Caco-2 (cell line): ENCODE measurements at regions of chr6 and their contacts with region 1.

Region 1: DNA sequence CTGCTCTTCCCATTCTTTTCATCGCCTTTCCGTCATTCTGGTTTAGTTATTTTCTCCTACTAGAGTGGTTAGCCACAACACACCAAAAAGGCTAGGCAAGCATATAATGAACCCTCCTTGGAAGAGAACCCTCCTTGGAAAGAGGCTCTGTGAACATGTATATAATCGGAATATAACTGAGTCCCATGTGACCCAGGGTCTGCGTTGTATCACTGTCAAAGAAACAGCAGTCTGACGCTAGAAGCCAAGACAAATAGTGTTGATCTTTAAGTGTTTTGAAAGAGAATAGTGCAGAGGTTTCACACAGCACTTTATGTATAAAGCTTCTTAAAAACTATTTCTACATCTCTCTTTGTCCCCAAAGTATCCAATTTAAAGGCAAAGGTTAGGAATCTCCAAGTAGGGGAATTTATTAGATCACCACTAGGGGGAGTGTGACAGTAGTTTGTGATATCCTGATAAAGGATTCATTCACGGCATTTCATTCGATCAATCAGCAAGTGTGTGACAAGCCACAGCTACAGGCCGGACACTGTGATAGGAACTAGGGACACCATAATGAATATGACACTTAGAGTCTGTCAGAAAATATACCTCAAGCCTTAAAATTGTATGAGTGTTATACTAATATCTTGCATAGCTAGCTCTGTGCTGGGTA is 395.3 kb downstream of the CD109 start:
- DNase-seq: peak in 1 of 2 experiments; percentile 41
- H3K4me3 ChIP-seq: no peak overlapping the region
- H3K4me3 Mint-ChIP-seq: no peak overlapping the region
- H3K27ac Mint-ChIP-seq: no peak overlapping the region
- H3K4me1 ChIP-seq: peaks cover 5% of the 10 kb centered on the region; the same call in 1 of the 2 replicates
- H3K4me1 Mint-ChIP-seq: no peaks in the 10 kb centered on the region
- H3K27me3 ChIP-seq: no peaks in the 10 kb centered on the region
- H3K27me3 Mint-ChIP-seq: peaks cover 2% of the 10 kb centered on the region
- CTCF ChIP-seq: peak; percentile 55 to 76

Region 2: GRCh38 chr6:74268815-74269599 is 177.7 kb after region 1 on chr6:
- CTCF ChIA-PET with region 1: no interaction called
- POLR2A ChIA-PET with region 1: no interaction called
- intact Hi-C with region 1: no loop called
- DNase-seq: no peak
- H3K4me3 ChIP-seq: no peak overlapping the region
- H3K4me3 Mint-ChIP-seq: no peak overlapping the region
- H3K27ac Mint-ChIP-seq: peak overlapping the region; percentile 12
- H3K4me1 ChIP-seq: peaks cover 12% of the 10 kb centered on the region; the same call in 1 of the 2 replicates
- H3K4me1 Mint-ChIP-seq: peaks cover 6% of the 10 kb centered on the region
- H3K27me3 ChIP-seq: no peaks in the 10 kb centered on the region
- H3K27me3 Mint-ChIP-seq: no peaks in the 10 kb centered on the region
- CTCF ChIP-seq: no peak

Region 3: GRCh38 chr6:74280130-74280692 is 188.9 kb after region 1 on chr6:
- CTCF ChIA-PET with region 1: no interaction called
- POLR2A ChIA-PET with region 1: no interaction called
- intact Hi-C with region 1: loop called (anchors 10 kb)
- DNase-seq: no peak
- H3K4me3 ChIP-seq: no peak overlapping the region
- H3K4me3 Mint-ChIP-seq: no peak overlapping the region
- H3K27ac Mint-ChIP-seq: no peak overlapping the region
- H3K4me1 ChIP-seq: no peaks in the 10 kb centered on the region
- H3K4me1 Mint-ChIP-seq: no peaks in the 10 kb centered on the region
- H3K27me3 ChIP-seq: no peaks in the 10 kb centered on the region
- H3K27me3 Mint-ChIP-seq: no peaks in the 10 kb centered on the region
- CTCF ChIP-seq: peak in 1 of 2 experiments; percentile 17

Region 4: GRCh38 chr6:74346936-74347535 is 255.8 kb after region 1 on chr6:
- CTCF ChIA-PET with region 1: no interaction called
- POLR2A ChIA-PET with region 1: no interaction called
- intact Hi-C with region 1: no loop called
- DNase-seq: no peak
- H3K4me3 ChIP-seq: no peak overlapping the region
- H3K4me3 Mint-ChIP-seq: no peak overlapping the region
- H3K27ac Mint-ChIP-seq: no peak overlapping the region
- H3K4me1 ChIP-seq: no peaks in the 10 kb centered on the region
- H3K4me1 Mint-ChIP-seq: no peaks in the 10 kb centered on the region
- H3K27me3 ChIP-seq: no peaks in the 10 kb centered on the region
- H3K27me3 Mint-ChIP-seq: no peaks in the 10 kb centered on the region
- CTCF ChIP-seq: no peak

Region 5: GRCh38 chr6:74409447-74409846 is 318.2 kb after region 1 on chr6:
- CTCF ChIA-PET with region 1: interaction called, 3 read pairs
- POLR2A ChIA-PET with region 1: no interaction called
- intact Hi-C with region 1: loop called (anchors 10 kb)
- DNase-seq: peak in 1 of 2 experiments; percentile 24
- H3K4me3 ChIP-seq: no peak overlapping the region
- H3K4me3 Mint-ChIP-seq: no peak overlapping the region
- H3K27ac Mint-ChIP-seq: no peak overlapping the region
- H3K4me1 ChIP-seq: peaks cover 16% of the 10 kb centered on the region
- H3K4me1 Mint-ChIP-seq: peaks cover 9% of the 10 kb centered on the region
- H3K27me3 ChIP-seq: no peaks in the 10 kb centered on the region
- H3K27me3 Mint-ChIP-seq: no peaks in the 10 kb centered on the region
- CTCF ChIP-seq: peak; percentile 42 to 46